Endothelial cell of umbilical vein (primary cell): ENCODE measurements at regions of chr7 and their contacts with region 1.

Region 1: DNA sequence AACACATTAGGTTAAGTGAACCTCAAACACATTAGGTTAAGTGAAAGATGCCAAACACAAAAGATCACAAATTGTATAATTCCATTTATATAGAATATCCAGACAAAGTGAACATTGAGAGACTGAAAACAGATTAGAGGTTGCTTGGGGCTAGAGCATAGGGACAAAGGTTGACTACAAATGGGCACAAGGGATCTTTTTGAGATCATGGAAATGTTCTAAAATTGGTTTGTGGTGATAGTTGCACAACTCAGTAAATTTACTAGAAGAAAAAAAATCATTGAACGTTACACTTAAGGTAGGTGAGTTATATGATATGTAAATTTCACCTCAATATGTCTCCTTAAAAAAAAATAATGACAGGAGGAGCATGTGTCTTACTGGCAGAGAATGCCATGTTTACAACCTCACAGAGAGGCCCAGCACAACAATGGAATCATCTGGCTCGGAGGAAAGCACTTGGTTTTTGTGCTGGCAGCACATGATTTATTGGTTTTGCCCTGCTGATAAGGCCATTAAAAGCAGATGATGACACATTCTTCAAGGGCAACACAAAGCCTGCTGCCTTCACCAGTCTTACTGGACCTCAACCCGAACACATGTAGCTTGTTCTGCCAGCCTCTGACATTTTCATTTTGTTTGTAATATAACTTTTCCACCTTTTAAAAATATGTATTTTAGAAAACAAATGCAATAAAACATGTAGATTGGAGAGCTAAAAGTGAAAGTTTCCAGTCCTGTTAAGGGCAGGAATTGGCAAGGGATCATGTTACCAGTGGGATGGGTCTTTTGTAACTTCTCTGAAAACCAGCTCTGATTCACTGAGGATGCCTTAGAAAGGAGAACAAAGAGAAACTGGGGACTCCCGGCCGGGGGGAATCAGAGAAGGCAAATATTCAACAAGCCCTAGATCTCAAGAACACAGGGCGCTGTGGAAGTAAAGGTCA is 11.9 kb upstream of the LMOD2 start:
- DNase-seq: peak; percentile 96
- H3K4me3 ChIP-seq: peak overlapping the region in 1 of 3 experiments; percentile 9
- H3K27ac ChIP-seq: peak overlapping the region; percentile 10
- H3K4me1 ChIP-seq: peaks cover 21% of the 10 kb centered on the region
- H3K27me3 ChIP-seq: no peaks in the 10 kb centered on the region
- CTCF ChIP-seq: no peak
- POLR2A ChIP-seq: no peak

Region 2: GRCh38 chr7:124929467-124930172 is 1285.9 kb after region 1 on chr7 and contains the start of gene POT1:
- CTCF ChIA-PET with region 1: no interaction called
- POLR2A ChIA-PET with region 1: no interaction called
- dilution Hi-C with region 1: no loop called
- intact Hi-C with region 1: loop called (anchors 5 kb)
- DNase-seq: peak; percentile 100
- H3K4me3 ChIP-seq: peak within 1 kb of the TSS; percentile 83 to 95 (median 84)
- H3K27ac ChIP-seq: peak within 1 kb of the TSS; percentile 81
- H3K4me1 ChIP-seq: peaks cover 8% of the 10 kb centered on the region
- H3K27me3 ChIP-seq: no peaks in the 10 kb centered on the region
- CTCF ChIP-seq: no peak
- POLR2A ChIP-seq: peak; percentile 87
- total RNA-seq, gene POT1: 21.8 and 22.4 TPM in 2 replicates